ENCODE measurements at regions of chr3 and their contacts with region 1.

Region 1: DNA sequence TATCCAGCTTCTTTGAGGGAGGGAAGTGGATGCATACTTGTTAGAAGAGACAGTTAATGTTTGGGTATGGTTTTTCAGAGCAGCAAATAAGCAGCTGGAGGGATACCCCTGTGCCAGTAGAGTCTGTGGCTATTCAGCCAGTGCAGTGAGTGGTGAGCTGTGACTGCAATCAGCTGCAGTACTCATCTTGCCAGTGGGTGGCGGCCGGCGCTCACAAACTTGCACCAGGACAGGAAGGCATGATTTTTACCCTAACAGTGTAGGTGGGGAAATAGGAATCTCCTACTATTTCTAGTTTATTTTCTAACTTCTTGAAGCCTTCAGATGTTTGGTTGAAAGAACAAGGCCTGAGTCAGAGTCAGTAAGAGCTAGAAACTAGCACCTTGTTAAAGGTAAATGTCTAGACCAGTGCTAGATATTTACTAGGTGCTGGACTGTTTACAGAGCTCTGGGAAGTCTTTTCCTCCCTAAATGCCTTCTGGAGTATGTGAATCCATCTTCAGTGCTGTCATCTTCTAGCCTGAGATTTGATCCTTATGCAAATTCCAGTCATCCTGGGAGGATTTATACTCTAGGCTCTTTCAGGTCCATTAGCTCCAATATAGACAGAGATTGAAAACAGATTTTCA is 23.6 kb downstream of the TIMP4 start:
- DNase-seq: peak; percentile 68
- H3K4me3 ChIP-seq: no peak overlapping the region
- H3K27ac ChIP-seq: no peak overlapping the region
- H3K4me1 ChIP-seq: no peaks in the 10 kb centered on the region
- H3K27me3 ChIP-seq: peaks cover 9% of the 10 kb centered on the region
- CTCF ChIP-seq: peak; percentile 92

Region 2: GRCh38 chr3:12107071-12107713 is 28.0 kb before region 1 on chr3:
- CTCF ChIA-PET with region 1: no interaction called
- POLR2A ChIA-PET with region 1: no interaction called
- intact Hi-C with region 1: no loop called
- DNase-seq: no peak
- H3K4me3 ChIP-seq: no peak overlapping the region
- H3K27ac ChIP-seq: no peak overlapping the region
- H3K4me1 ChIP-seq: no peaks in the 10 kb centered on the region
- H3K27me3 ChIP-seq: peaks cover 17% of the 10 kb centered on the region
- CTCF ChIP-seq: no peak

Region 3: GRCh38 chr3:12175844-12176453 is 40.8 kb after region 1 on chr3:
- CTCF ChIA-PET with region 1: interaction called, 14 read pairs
- POLR2A ChIA-PET with region 1: no interaction called
- intact Hi-C with region 1: loop called (anchors 1 kb)
- DNase-seq: peak; percentile 57
- H3K4me3 ChIP-seq: no peak overlapping the region
- H3K27ac ChIP-seq: no peak overlapping the region
- H3K4me1 ChIP-seq: peaks cover 9% of the 10 kb centered on the region
- H3K27me3 ChIP-seq: no peaks in the 10 kb centered on the region
- CTCF ChIP-seq: peak; percentile 81

Region 4: GRCh38 chr3:12479919-12480425 is 344.8 kb after region 1 on chr3:
- CTCF ChIA-PET with region 1: interaction called, 35 read pairs
- POLR2A ChIA-PET with region 1: no interaction called
- intact Hi-C with region 1: loop called (anchors 1 kb)
- DNase-seq: peak; percentile 64
- H3K4me3 ChIP-seq: no peak overlapping the region
- H3K27ac ChIP-seq: no peak overlapping the region
- H3K4me1 ChIP-seq: peaks cover 6% of the 10 kb centered on the region
- H3K27me3 ChIP-seq: no peaks in the 10 kb centered on the region
- CTCF ChIP-seq: peak; percentile 78